ENCODE measurements at regions of chr1 and their contacts with region 1.

Region 1: GRCh38 chr1:52056163-52056936 is at the start of gene BTF3L4:
- DNase-seq: peak; percentile 98
- ATAC-seq: peak; percentile 96
- H3K4me3 Mint-ChIP-seq: peak within 1 kb of the TSS; percentile 91
- H3K27ac Mint-ChIP-seq: peak within 1 kb of the TSS; percentile 99
- H3K4me1 Mint-ChIP-seq: peaks cover 40% of the 10 kb centered on the region
- H3K27me3 Mint-ChIP-seq: no peaks in the 10 kb centered on the region
- total RNA-seq, gene BTF3L4: 33.8 to 37.8 TPM

Region 2: DNA sequence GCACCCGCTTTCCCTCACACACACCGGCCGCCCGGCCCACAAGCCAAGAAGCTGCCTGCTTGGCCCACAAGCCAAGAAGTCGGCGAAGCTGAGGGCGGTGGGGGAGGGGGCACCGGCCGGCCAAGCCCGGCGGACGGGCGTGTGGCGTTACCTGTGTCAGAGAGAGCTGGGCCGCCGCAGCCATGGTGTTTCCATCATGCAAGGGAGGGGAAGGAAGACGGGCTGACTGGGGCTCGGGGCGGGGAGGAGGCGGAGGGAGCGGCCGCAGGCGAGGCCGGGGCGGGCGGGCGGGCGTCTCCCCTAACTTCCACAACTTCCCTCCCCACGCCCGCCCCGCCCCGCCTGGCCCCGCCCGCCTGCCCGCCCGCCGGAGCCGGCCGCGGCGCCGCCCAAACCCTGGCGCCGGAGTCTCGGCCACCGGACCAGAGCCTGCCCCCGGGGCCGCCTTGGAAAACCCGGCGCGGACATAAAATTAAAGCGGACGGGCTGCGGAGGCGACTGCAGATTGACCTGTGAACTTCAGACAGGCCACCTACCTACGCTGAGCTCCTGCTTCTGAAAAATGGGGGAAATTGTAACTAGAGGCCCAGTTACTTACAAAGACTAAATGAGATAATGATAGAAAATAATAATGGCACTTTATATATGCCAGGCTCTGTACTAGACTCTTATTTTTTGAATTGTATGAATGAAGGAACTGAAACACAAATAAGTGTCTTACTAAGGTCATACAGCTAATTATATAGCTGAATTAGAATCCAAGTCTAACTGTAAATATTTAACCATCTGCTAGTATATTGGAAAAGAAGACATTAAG is 537.1 kb before region 1 on chr1 and contains the start of gene EPS15:
- CTCF ChIA-PET with region 1: no interaction called
- POLR2A ChIA-PET with region 1: no interaction called
- intact Hi-C with region 1: loop called in 1 of 2 experiments (anchors 1 kb)
- DNase-seq: peak; percentile 95
- ATAC-seq: peak; percentile 76
- H3K4me3 Mint-ChIP-seq: peak within 1 kb of the TSS; percentile 100
- H3K27ac Mint-ChIP-seq: peak within 1 kb of the TSS; percentile 93
- H3K4me1 Mint-ChIP-seq: peaks cover 48% of the 10 kb centered on the region
- H3K27me3 Mint-ChIP-seq: no peaks in the 10 kb centered on the region
- total RNA-seq, gene EPS15: 59.6 to 61.6 TPM

Region 3: GRCh38 chr1:52033190-52034049 is 22.9 kb before region 1 on chr1 and contains the start of gene KTI12:
- CTCF ChIA-PET with region 1: interaction called, 3 read pairs
- POLR2A ChIA-PET with region 1: no interaction called
- intact Hi-C with region 1: loop called (anchors 1 kb)
- DNase-seq: peak; percentile 93
- ATAC-seq: peak; percentile 94
- H3K4me3 Mint-ChIP-seq: peak within 1 kb of the TSS; percentile 91
- H3K27ac Mint-ChIP-seq: peak within 1 kb of the TSS; percentile 93
- H3K4me1 Mint-ChIP-seq: peaks cover 32% of the 10 kb centered on the region
- H3K27me3 Mint-ChIP-seq: no peaks in the 10 kb centered on the region
- total RNA-seq, gene KTI12: 7.6 to 12.3 TPM

Region 4: GRCh38 chr1:52506349-52506748 is 450.0 kb after region 1 on chr1:
- CTCF ChIA-PET with region 1: no interaction called
- POLR2A ChIA-PET with region 1: no interaction called
- intact Hi-C with region 1: no loop called
- DNase-seq: no peak
- ATAC-seq: no peak
- H3K4me3 Mint-ChIP-seq: no peak overlapping the region
- H3K27ac Mint-ChIP-seq: no peak overlapping the region
- H3K4me1 Mint-ChIP-seq: peaks cover 9% of the 10 kb centered on the region
- H3K27me3 Mint-ChIP-seq: no peaks in the 10 kb centered on the region

Region 5: GRCh38 chr1:52636721-52637695 is 580.7 kb after region 1 on chr1:
- CTCF ChIA-PET with region 1: no interaction called
- POLR2A ChIA-PET with region 1: no interaction called
- intact Hi-C with region 1: loop called in 1 of 2 experiments (anchors 5 kb)
- DNase-seq: peak; percentile 84
- ATAC-seq: peak; percentile 62
- H3K4me3 Mint-ChIP-seq: peak overlapping the region; percentile 68
- H3K27ac Mint-ChIP-seq: peak overlapping the region; percentile 97
- H3K4me1 Mint-ChIP-seq: peaks cover 74% of the 10 kb centered on the region
- H3K27me3 Mint-ChIP-seq: no peaks in the 10 kb centered on the region

Region 6: DNA sequence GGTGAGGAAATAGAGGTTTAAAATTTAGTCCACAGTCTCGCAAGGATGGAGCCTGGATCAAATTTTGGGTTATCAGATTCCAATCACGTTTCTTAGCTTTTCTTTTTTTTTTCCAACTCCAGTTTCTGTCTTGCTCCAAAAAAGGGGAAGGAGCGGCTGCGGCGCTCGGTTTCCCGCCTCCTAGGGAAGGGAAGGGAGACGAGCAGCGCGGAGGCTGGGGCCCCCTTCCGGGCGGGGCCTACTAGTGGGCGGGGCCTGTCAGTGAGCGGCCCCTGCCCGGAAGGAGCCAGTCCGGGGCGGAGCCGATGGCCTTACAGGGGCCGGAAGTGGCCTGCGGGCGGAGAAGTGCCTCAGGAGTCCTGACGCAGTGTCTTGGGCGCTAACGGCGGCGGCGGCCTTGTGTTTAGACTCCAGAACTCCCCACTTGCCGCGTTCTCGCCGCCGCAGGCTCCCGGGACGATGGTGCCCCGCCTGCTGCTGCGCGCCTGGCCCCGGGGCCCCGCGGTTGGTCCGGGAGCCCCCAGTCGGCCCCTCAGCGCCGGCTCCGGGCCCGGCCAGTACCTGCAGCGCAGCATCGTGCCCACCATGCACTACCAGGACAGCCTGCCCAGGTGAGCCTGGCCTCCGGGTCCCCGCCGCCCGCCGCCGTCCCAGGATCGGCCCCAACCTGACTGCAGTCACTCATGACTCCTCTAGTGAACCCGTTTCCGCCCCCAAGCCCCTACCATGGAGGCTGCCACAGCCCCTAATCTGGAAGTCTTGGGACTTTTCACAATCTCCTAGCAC is 1140.3 kb after region 1 on chr1 and contains the start of gene CPT2:
- CTCF ChIA-PET with region 1: no interaction called
- POLR2A ChIA-PET with region 1: no interaction called
- intact Hi-C with region 1: loop called in 1 of 2 experiments (anchors 5 kb)
- DNase-seq: peak; percentile 96
- ATAC-seq: peak; percentile 98
- H3K4me3 Mint-ChIP-seq: peak within 1 kb of the TSS; percentile 98
- H3K27ac Mint-ChIP-seq: peak within 1 kb of the TSS; percentile 99
- H3K4me1 Mint-ChIP-seq: peaks cover 25% of the 10 kb centered on the region
- H3K27me3 Mint-ChIP-seq: no peaks in the 10 kb centered on the region
- total RNA-seq, gene CPT2: 20.7 to 23.7 TPM